Mammary epithelial cell (primary cell): ENCODE measurements at regions of chr19 and their contacts with region 1.

Region 1: GRCh38 chr19:54648125-54648524 is 14.7 kb upstream of the LILRB4 start:
- DNase-seq: no peak
- H3K4me3 ChIP-seq: no peak overlapping the region
- H3K27ac ChIP-seq: no peak overlapping the region
- H3K4me1 ChIP-seq: no peaks in the 10 kb centered on the region
- H3K27me3 ChIP-seq: no peaks in the 10 kb centered on the region
- CTCF ChIP-seq: no peak

Region 2: DNA sequence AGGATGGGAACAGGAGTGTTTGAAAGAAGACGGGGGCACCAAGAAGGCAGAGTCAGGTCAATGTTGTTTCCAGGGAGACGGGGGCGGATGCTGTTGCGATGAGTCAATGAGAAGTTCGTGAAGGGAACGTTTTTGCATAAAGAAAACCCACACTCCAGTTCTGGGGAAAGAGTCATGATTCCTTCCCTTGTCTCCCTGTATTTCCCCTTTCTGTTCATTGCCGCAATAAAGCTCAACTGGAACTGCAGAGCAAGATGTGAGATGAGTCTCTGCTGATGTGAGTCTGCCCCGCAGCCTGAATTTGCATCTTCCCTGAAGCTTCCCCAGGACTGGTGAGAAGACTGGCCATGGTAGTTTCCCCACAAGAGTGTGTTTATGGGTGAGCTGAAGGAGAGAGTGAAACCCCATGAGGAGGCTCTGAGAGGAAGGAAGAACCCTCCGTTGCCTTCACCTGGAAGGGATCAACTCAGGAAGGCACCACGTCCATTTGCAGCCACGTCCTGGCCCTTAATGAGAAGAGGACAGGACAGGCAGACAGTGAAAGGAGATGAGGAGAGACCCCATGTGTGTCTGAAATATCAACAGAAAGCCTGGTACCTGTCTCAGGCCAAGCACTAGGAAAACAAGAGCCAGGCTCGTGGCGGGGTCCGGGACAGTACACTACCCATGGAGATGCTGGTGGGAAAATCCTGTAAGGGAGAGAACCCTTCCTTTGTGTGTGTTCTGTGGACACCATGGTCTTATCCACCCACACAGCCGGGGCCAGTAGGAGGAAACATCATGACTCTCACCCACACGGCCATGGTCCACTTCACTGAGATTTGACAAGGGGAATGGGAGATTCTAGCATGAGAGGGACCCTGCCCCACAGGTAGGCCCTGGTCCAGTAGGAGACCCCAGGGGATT is 41.0 kb before region 1 on chr19:
- CTCF ChIA-PET with region 1: no interaction called
- dilution Hi-C with region 1: loop called (anchors 5 kb)
- in situ Hi-C with region 1: no loop called
- intact Hi-C with region 1: no loop called
- DNase-seq: no peak
- H3K4me3 ChIP-seq: no peak overlapping the region
- H3K27ac ChIP-seq: no peak overlapping the region
- H3K4me1 ChIP-seq: no peaks in the 10 kb centered on the region
- H3K27me3 ChIP-seq: no peaks in the 10 kb centered on the region
- CTCF ChIP-seq: no peak

Region 3: DNA sequence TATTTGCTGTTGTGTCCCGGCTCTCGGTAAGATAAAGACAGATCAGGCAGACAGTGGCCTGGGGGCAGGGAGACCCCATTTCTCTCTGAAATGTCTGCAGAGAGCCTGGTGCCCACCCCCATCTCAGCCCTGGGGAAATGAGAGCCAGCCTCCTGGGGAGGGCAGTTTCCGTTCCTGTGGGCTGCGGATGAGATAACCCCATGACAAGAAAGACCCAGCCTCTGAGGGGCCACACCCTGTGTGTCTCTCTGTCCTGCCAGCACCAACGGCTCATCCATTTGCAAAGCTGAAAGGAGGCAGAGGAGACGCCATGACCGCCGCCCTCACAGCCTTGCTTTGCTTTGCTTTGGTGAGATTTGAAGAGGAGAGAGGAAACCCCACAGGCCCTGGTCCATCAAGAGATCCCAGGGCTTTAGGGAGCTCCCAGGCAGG is 48.0 kb after region 1 on chr19:
- CTCF ChIA-PET with region 1: no interaction called
- dilution Hi-C with region 1: no loop called
- in situ Hi-C with region 1: no loop called
- intact Hi-C with region 1: no loop called
- DNase-seq: no peak
- H3K4me3 ChIP-seq: no peak overlapping the region
- H3K27ac ChIP-seq: no peak overlapping the region
- H3K4me1 ChIP-seq: no peaks in the 10 kb centered on the region
- H3K27me3 ChIP-seq: no peaks in the 10 kb centered on the region
- CTCF ChIP-seq: no peak